Ascending aorta (tissue), 2 donors: ENCODE measurements at regions of chr10 and their contacts with region 1.

Region 1: DNA sequence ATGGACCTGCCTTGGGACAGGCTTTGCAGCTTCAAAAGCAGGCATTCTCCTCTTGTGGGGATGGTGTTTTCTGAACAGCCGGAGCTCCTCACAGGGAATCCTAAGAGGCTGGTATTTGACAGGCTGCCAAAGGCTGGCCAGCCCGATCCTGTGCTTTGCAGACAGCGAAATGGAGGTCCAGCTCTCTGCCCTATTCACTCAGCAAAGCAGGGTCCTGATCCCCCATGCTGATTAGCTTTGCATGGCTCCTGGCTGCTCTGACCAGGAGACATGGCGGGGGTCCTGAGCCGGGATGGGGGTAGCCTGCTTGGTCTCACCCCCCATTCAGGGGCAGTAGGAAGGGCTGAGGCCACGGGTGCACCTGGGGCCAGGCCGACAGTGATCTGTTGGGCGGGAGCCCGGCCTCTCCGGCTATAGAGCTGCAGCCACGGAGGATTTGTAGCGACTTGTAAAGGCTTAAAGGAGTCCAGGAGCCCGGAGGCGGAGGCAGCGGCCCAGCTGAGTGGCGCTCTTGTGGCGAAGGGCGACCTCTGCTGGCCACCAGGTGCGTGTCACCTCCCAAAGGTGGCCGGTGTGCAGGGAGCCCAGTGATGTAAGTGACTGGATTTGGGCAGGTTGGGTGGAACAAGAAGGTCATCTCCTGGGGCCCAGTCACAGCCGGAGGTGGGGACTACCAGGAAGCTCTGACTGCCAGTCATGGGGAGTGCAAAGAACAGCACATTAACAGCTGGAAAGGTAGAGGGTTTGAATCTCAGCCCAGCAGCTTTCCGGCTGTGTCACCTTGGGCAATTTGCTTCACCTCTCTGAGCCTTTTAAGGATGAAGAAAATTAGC is 126.5 kb downstream of the ZMIZ1 start:
- DNase-seq: peak; percentile 36 to 93
- H3K4me3 ChIP-seq: no peak overlapping the region
- H3K27ac ChIP-seq: peak overlapping the region in 1 of 2 donors; percentile 62
- H3K4me1 ChIP-seq: peaks cover 3 to 7% of the 10 kb centered on the region in 2 donors
- H3K27me3 ChIP-seq: no peaks in the 10 kb centered on the region
- CTCF ChIP-seq: peak; percentile 89 to 97 (median 93)

Region 2: DNA sequence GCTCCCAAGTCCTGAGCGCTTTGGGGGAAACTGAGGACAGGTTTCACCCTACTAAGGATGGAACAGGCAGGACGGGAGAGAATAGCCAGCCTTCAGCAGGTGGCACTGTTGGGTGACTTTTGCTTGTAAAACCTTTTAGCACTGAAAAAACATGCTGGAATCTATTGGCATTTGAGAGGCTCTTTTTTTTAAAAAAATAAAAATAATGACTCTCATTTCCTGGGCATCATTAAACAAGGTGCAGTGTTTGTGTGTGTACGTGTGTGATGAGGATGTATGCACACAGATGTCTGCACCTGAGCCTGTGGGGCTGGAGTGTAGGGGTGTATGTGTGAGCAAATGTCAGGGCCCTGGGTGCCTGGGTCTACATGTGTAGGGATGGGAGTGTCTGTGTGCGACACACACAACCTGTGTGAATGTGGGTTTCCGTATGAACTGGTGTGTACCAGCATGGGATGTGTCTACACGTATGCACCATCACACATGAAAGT is 983.7 kb before region 1 on chr10:
- intact Hi-C with region 1: loop called (anchors 2 kb)
- DNase-seq: no peak
- H3K4me3 ChIP-seq: no peak overlapping the region
- H3K27ac ChIP-seq: no peak overlapping the region
- H3K4me1 ChIP-seq: peaks cover 4 to 13% of the 10 kb centered on the region in 2 donors
- H3K27me3 ChIP-seq: no peaks in the 10 kb centered on the region
- CTCF ChIP-seq: peak; percentile 42 to 72 (median 45)

Region 3: GRCh38 chr10:78664929-78665553 is 530.3 kb before region 1 on chr10:
- intact Hi-C with region 1: loop called (anchors 10 kb)
- DNase-seq: no peak
- H3K4me3 ChIP-seq: no peak overlapping the region
- H3K27ac ChIP-seq: no peak overlapping the region
- H3K4me1 ChIP-seq: no peaks in the 10 kb centered on the region
- H3K27me3 ChIP-seq: no peaks in the 10 kb centered on the region
- CTCF ChIP-seq: peak in 2 of 3 experiments; percentile 17 to 39

Region 4: GRCh38 chr10:78972947-78973900 is 222.1 kb before region 1 on chr10:
- intact Hi-C with region 1: loop called (anchors 5 kb)
- DNase-seq: peak; percentile 49 to 90
- H3K4me3 ChIP-seq: peak overlapping the region; percentile 64 to 67
- H3K27ac ChIP-seq: peak overlapping the region; percentile 95 to 98
- H3K4me1 ChIP-seq: peaks cover 6 to 22% of the 10 kb centered on the region in 2 donors
- H3K27me3 ChIP-seq: no peaks in the 10 kb centered on the region
- CTCF ChIP-seq: no peak

Region 5: DNA sequence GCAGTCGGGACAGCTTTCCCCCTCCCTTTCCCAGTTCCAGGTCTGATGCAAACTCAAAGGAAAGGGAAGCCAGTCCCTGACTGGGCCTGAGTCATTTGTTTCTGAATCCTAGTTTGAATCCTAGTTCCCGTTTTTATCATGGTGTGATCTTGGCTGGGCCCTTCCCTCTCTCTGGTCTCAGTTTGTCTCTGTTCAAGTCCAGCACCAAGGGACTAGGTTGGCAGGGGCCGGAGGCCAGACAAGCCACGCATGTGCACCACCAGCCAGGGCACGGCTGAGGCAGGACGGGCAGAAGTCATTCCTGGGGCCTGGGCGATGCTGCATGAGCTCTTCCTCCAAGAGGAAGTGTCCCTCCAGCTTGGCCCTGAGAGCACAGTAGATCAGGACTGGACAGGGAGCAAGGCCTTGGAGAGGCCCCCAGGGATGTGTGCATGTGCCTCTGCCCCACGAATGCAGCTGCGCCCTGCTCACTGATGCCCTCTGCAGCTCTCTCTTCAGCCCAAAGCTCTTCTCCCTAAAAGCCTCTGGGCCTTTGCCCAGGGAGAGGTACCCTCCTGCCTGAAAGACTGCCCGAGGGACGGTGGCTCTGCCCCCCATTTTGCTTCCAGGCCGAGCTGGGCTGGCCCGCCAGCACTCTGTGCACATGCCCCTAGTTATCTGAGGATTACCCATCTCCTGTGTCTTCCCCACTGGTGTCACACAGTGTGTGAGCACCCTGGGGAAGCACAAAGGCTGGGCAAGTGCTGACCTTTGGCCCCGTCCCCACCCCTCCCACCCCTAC is 39.8 kb before region 1 on chr10:
- intact Hi-C with region 1: loop called (anchors 2 kb)
- DNase-seq: peak in 1 of 2 donors; percentile 84
- H3K4me3 ChIP-seq: no peak overlapping the region
- H3K27ac ChIP-seq: peak overlapping the region; percentile 87 to 88
- H3K4me1 ChIP-seq: peaks cover 56 to 100% of the 10 kb centered on the region in 2 donors
- H3K27me3 ChIP-seq: no peaks in the 10 kb centered on the region
- CTCF ChIP-seq: peak in 1 of 3 experiments; percentile 24

Region 6: GRCh38 chr10:79434821-79435251 is 239.5 kb after region 1 on chr10:
- intact Hi-C with region 1: no loop called
- DNase-seq: no peak
- H3K4me3 ChIP-seq: peak overlapping the region; percentile 37 to 44
- H3K27ac ChIP-seq: peak overlapping the region; percentile 83 to 93
- H3K4me1 ChIP-seq: peaks cover 17 to 61% of the 10 kb centered on the region in 2 donors
- H3K27me3 ChIP-seq: no peaks in the 10 kb centered on the region
- CTCF ChIP-seq: no peak